Activated CD4-positive, alpha-beta T cell treated with anti-CD3 and anti-CD28 coated beads for 36 hours (primary cell): ENCODE measurements at regions of chrX and their contacts with region 1.

Region 1: GRCh38 chrX:24259544-24260240 is 54.2 kb downstream of the SUPT20HL2 start:
- DNase-seq: peak; percentile 41
- ATAC-seq: peak; percentile 54
- H3K4me3 Mint-ChIP-seq: no peak overlapping the region
- H3K27ac Mint-ChIP-seq: peak overlapping the region; percentile 37
- H3K4me1 Mint-ChIP-seq: peaks cover 21% of the 10 kb centered on the region
- H3K27me3 Mint-ChIP-seq: no peaks in the 10 kb centered on the region

Region 2: DNA sequence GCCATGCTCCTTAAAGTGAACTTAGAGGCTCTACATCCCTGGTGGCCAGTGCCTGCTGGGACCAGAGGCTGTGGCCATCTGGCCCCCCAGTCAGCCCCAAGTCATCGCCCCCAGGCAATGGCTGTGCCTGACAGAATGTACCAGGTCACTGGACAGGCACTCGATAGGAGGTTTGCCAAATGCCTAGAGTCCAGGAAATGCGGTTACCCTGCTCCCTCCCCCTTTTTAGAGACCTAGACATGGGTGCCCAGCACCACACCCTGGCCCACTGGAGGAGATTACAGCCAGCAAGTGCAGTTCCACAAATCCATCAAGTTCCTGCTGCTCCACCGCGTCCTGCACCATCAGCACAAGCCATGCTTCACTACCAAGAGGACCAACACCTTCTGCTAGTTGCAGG is 126.4 kb before region 1 on chrX:
- CTCF ChIA-PET with region 1: no interaction called
- POLR2A ChIA-PET with region 1: no interaction called
- intact Hi-C with region 1: no loop called
- DNase-seq: no peak
- ATAC-seq: no peak
- H3K4me3 Mint-ChIP-seq: no peak overlapping the region
- H3K27ac Mint-ChIP-seq: no peak overlapping the region
- H3K4me1 Mint-ChIP-seq: no peaks in the 10 kb centered on the region
- H3K27me3 Mint-ChIP-seq: no peaks in the 10 kb centered on the region

Region 3: GRCh38 chrX:24285082-24285481 is 25.4 kb after region 1 on chrX:
- CTCF ChIA-PET with region 1: interaction called, 5 read pairs
- POLR2A ChIA-PET with region 1: no interaction called
- intact Hi-C with region 1: loop called in 1 of 2 experiments (anchors 2 kb)
- DNase-seq: no peak
- ATAC-seq: no peak
- H3K4me3 Mint-ChIP-seq: no peak overlapping the region
- H3K27ac Mint-ChIP-seq: no peak overlapping the region
- H3K4me1 Mint-ChIP-seq: no peaks in the 10 kb centered on the region
- H3K27me3 Mint-ChIP-seq: peaks cover 2% of the 10 kb centered on the region

Region 4: GRCh38 chrX:24294620-24295019 is 34.9 kb after region 1 on chrX:
- CTCF ChIA-PET with region 1: interaction called, 5 read pairs
- POLR2A ChIA-PET with region 1: no interaction called
- intact Hi-C with region 1: loop called in 1 of 2 experiments (anchors 5 kb)
- DNase-seq: peak; percentile 73
- ATAC-seq: peak; percentile 47
- H3K4me3 Mint-ChIP-seq: no peak overlapping the region
- H3K27ac Mint-ChIP-seq: no peak overlapping the region
- H3K4me1 Mint-ChIP-seq: no peaks in the 10 kb centered on the region
- H3K27me3 Mint-ChIP-seq: no peaks in the 10 kb centered on the region

Region 5: GRCh38 chrX:24498975-24499374 is 239.3 kb after region 1 on chrX:
- CTCF ChIA-PET with region 1: interaction called, 12 read pairs
- POLR2A ChIA-PET with region 1: no interaction called
- intact Hi-C with region 1: loop called (anchors 5 to 10 kb)
- DNase-seq: no peak
- ATAC-seq: peak; percentile 78
- H3K4me3 Mint-ChIP-seq: no peak overlapping the region
- H3K27ac Mint-ChIP-seq: peak overlapping the region; percentile 43
- H3K4me1 Mint-ChIP-seq: peaks cover 23% of the 10 kb centered on the region
- H3K27me3 Mint-ChIP-seq: no peaks in the 10 kb centered on the region